ENCODE measurements at regions of chr3 and their contacts with region 1.

Region 1: GRCh38 chr3:90091204-90091924 is 983.9 kb downstream of the EPHA3 start:
- DNase-seq: peak; percentile 68
- H3K4me3 ChIP-seq: no peak overlapping the region
- H3K4me1 ChIP-seq: no peaks in the 10 kb centered on the region
- H3K27me3 ChIP-seq: no peaks in the 10 kb centered on the region

Region 2: DNA sequence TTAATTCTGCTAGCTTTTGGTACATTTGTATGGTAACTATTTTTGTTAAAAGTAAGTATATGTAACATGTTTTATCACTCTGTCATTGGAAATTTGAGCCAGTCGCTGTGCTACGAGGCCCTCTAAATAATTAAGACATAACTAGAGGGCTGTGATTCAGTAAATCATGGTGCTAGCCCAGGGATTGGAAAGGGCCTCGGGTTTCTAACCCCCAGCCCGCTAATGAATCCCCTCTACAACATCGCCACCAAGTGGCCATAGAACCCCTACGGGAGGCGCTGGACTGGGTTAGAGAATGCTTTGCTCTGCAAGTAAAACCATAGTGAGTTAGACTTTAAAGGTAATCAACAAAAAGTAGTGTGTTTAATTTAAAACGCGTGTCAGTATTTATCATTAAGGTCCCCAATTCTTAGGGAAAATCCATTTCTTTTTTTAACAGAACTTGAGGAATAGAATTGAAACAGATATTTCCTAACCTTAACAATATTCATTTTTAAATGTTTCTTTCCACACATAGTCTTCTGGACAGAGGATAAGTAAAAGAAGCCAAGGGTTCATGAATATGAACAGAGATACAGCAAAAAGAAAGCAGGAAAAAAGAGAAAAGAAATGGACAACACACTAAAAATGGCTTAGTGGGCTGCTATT is 239.3 kb before region 1 on chr3:
- in situ Hi-C with region 1: loop called (anchors 25 kb)
- DNase-seq: peak; percentile 85 to 88
- H3K4me3 ChIP-seq: no peak overlapping the region
- H3K4me1 ChIP-seq: peaks cover 4% of the 10 kb centered on the region; the same call in 1 of the 2 replicates
- H3K27me3 ChIP-seq: no peaks in the 10 kb centered on the region

Measured in HAP-1 (cell line).